ENCODE measurements at regions of chr1 and their contacts with region 1.

Region 1: GRCh38 chr1:184021728-184022127 is 15.8 kb downstream of the COLGALT2 start:
- DNase-seq: peak; percentile 39
- H3K4me3 ChIP-seq: no peak overlapping the region
- H3K27ac ChIP-seq: no peak overlapping the region
- H3K4me1 ChIP-seq: no peaks in the 10 kb centered on the region
- H3K27me3 ChIP-seq: no peaks in the 10 kb centered on the region
- CTCF ChIP-seq: no peak
- POLR2A ChIP-seq: no peak

Region 2: GRCh38 chr1:183953031-183953430 is 68.7 kb before region 1 on chr1:
- intact Hi-C with region 1: loop called (anchors 5 kb)
- DNase-seq: peak; percentile 21
- H3K4me3 ChIP-seq: no peak overlapping the region
- H3K27ac ChIP-seq: peak overlapping the region; percentile 40 to 47
- H3K4me1 ChIP-seq: no peaks in the 10 kb centered on the region
- H3K27me3 ChIP-seq: no peaks in the 10 kb centered on the region
- CTCF ChIP-seq: no peak
- POLR2A ChIP-seq: no peak

Measured in prostate gland (tissue), 2 donors.